HepG2 (cell line): ENCODE measurements at regions of chr12 and their contacts with region 1.

Region 1: DNA sequence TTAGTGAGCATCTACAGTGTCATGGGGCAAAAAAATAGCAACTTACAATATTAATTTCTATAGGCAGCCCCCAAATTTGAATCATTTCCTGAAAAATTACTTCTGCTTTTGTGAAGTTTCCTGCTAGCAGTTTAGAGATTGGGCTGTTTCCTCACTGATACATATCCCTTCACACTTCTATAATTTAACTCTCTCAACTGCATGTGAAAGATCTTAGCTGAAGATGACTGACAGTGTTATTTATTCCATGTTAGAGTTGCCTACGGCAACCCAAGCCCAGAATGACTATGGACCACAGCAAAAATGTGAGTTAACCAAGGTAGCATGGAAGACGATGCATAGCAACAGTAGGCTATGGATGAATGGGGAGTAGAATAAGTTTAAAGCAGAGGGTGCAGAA is at the start of gene KLRG1:
- DNase-seq: no peak
- ATAC-seq: no peak
- H3K4me3 ChIP-seq: no peak within 1 kb of the TSS
- H3K27ac ChIP-seq: no peak within 1 kb of the TSS
- H3K4me1 ChIP-seq: peaks cover 12% of the 10 kb centered on the region
- H3K27me3 ChIP-seq: no peaks in the 10 kb centered on the region
- CTCF ChIP-seq: no peak
- EP300 ChIP-seq: no peak
- POLR2A ChIP-seq: no peak
- RAD21 ChIP-seq: no peak
- total RNA-seq, gene KLRG1: 1.2 and 1.6 TPM in 2 replicates

Region 2: GRCh38 chr12:8609061-8609570 is 380.3 kb before region 1 on chr12:
- CTCF ChIA-PET with region 1: no interaction called
- POLR2A ChIA-PET with region 1: no interaction called
- in situ Hi-C with region 1: no loop called
- intact Hi-C with region 1: no loop called
- DNase-seq: peak; percentile 28
- ATAC-seq: peak; percentile 66
- H3K4me3 ChIP-seq: no peak overlapping the region
- H3K27ac ChIP-seq: no peak overlapping the region
- H3K4me1 ChIP-seq: no peaks in the 10 kb centered on the region
- H3K27me3 ChIP-seq: peaks cover 0 to 20% of the 10 kb centered on the region in 2 experiments; a peak in 3 of 5 replicates
- CTCF ChIP-seq: peak; percentile 71
- EP300 ChIP-seq: no peak
- POLR2A ChIP-seq: no peak
- RAD21 ChIP-seq: peak; percentile 33; the same call in 1 of the 2 replicates

Region 3: GRCh38 chr12:8890313-8891085 is 98.9 kb before region 1 on chr12:
- CTCF ChIA-PET with region 1: no interaction called
- POLR2A ChIA-PET with region 1: no interaction called
- in situ Hi-C with region 1: no loop called
- intact Hi-C with region 1: no loop called
- DNase-seq: peak; percentile 32
- ATAC-seq: peak; percentile 68
- H3K4me3 ChIP-seq: peak overlapping the region in 1 of 3 experiments; percentile 38; a peak in 1 of 6 replicates
- H3K27ac ChIP-seq: no peak overlapping the region
- H3K4me1 ChIP-seq: no peaks in the 10 kb centered on the region
- H3K27me3 ChIP-seq: 0 out of 5 replicates have a peak, but pooled peaks cover 0 to 4% of the 10 kb centered on the region in 2 experiments
- CTCF ChIP-seq: peak; percentile 77
- EP300 ChIP-seq: no peak
- POLR2A ChIP-seq: no peak
- RAD21 ChIP-seq: 0 out of 2 replicates have a peak, but pooled peaks have one; percentile 15

Region 4: GRCh38 chr12:9032202-9033178 is 43.1 kb after region 1 on chr12:
- CTCF ChIA-PET with region 1: no interaction called
- POLR2A ChIA-PET with region 1: no interaction called
- in situ Hi-C with region 1: no loop called
- intact Hi-C with region 1: loop called (anchors 5 kb)
- DNase-seq: no peak
- ATAC-seq: no peak; the same call in 2 of the 3 replicates
- H3K4me3 ChIP-seq: no peak overlapping the region
- H3K27ac ChIP-seq: no peak overlapping the region
- H3K4me1 ChIP-seq: peaks cover 19% of the 10 kb centered on the region
- H3K27me3 ChIP-seq: no peaks in the 10 kb centered on the region; a peak in 1 of 5 replicates
- CTCF ChIP-seq: no peak
- EP300 ChIP-seq: no peak
- POLR2A ChIP-seq: no peak
- RAD21 ChIP-seq: no peak